Endothelial cell of umbilical vein (primary cell): ENCODE measurements at regions of chr2 and their contacts with region 1.

Region 1: GRCh38 chr2:58680755-58681310 is 439.7 kb upstream of the FANCL start:
- DNase-seq: peak; percentile 8
- H3K4me3 ChIP-seq: no peak overlapping the region
- H3K27ac ChIP-seq: no peak overlapping the region
- H3K4me1 ChIP-seq: no peaks in the 10 kb centered on the region
- H3K27me3 ChIP-seq: no peaks in the 10 kb centered on the region
- CTCF ChIP-seq: no peak
- POLR2A ChIP-seq: no peak

Region 2: DNA sequence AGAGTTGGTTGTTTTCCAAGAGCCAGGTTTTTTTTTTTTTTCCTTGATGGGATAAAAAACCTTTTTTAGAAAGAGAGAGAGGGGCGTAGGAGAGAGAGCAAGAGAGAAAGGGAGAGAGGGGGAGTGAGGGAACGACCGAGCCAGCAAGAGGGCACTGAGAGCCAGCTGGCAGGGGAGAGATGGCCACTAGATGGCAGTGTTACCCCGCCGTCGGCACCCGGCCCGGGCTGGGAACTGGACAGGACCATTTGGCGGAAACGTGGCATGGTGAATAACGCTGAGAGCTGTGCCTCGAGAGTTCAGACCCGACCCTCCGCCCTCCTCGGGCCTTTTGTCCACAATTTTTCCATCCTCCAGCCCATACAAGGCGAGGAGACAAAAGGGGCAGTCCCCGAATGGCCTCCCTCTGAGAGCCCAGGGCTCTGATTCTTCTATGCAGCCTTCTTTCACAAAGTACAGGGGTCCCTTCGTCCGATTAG is 921.0 kb before region 1 on chr2:
- CTCF ChIA-PET with region 1: interaction called, 17 read pairs
- POLR2A ChIA-PET with region 1: no interaction called
- dilution Hi-C with region 1: no loop called
- intact Hi-C with region 1: loop called (anchors 1 kb)
- DNase-seq: peak; percentile 77
- H3K4me3 ChIP-seq: peak overlapping the region in 1 of 3 experiments; percentile 23
- H3K27ac ChIP-seq: no peak overlapping the region
- H3K4me1 ChIP-seq: peaks cover 4% of the 10 kb centered on the region
- H3K27me3 ChIP-seq: peaks cover 1 to 5% of the 10 kb centered on the region in 2 experiments
- CTCF ChIP-seq: peak; percentile 85 to 96
- POLR2A ChIP-seq: no peak

Region 3: GRCh38 chr2:58419983-58420382 is 260.9 kb before region 1 on chr2:
- CTCF ChIA-PET with region 1: no interaction called
- POLR2A ChIA-PET with region 1: no interaction called
- dilution Hi-C with region 1: no loop called
- intact Hi-C with region 1: no loop called
- DNase-seq: no peak
- H3K4me3 ChIP-seq: no peak overlapping the region
- H3K27ac ChIP-seq: no peak overlapping the region
- H3K4me1 ChIP-seq: no peaks in the 10 kb centered on the region
- H3K27me3 ChIP-seq: peaks cover 0 to under 1% of the 10 kb centered on the region in 2 experiments
- CTCF ChIP-seq: no peak
- POLR2A ChIP-seq: no peak

Region 4: GRCh38 chr2:58578276-58578675 is 102.6 kb before region 1 on chr2:
- CTCF ChIA-PET with region 1: interaction called, 305 read pairs
- POLR2A ChIA-PET with region 1: interaction called, 3 read pairs
- dilution Hi-C with region 1: no loop called
- intact Hi-C with region 1: no loop called
- DNase-seq: no peak
- H3K4me3 ChIP-seq: no peak overlapping the region
- H3K27ac ChIP-seq: no peak overlapping the region
- H3K4me1 ChIP-seq: peaks cover 2% of the 10 kb centered on the region
- H3K27me3 ChIP-seq: no peaks in the 10 kb centered on the region
- CTCF ChIP-seq: no peak
- POLR2A ChIP-seq: no peak

Region 5: GRCh38 chr2:58606799-58607198 is 74.0 kb before region 1 on chr2:
- CTCF ChIA-PET with region 1: interaction called, 12 read pairs
- POLR2A ChIA-PET with region 1: no interaction called
- dilution Hi-C with region 1: no loop called
- intact Hi-C with region 1: no loop called
- DNase-seq: no peak
- H3K4me3 ChIP-seq: no peak overlapping the region
- H3K27ac ChIP-seq: no peak overlapping the region
- H3K4me1 ChIP-seq: no peaks in the 10 kb centered on the region
- H3K27me3 ChIP-seq: no peaks in the 10 kb centered on the region
- CTCF ChIP-seq: no peak
- POLR2A ChIP-seq: no peak

Region 6: GRCh38 chr2:58633576-58634365 is 47.1 kb before region 1 on chr2:
- CTCF ChIA-PET with region 1: interaction called, 21 read pairs
- POLR2A ChIA-PET with region 1: no interaction called
- dilution Hi-C with region 1: no loop called
- intact Hi-C with region 1: no loop called
- DNase-seq: peak; percentile 91
- H3K4me3 ChIP-seq: no peak overlapping the region
- H3K27ac ChIP-seq: peak overlapping the region; percentile 96
- H3K4me1 ChIP-seq: peaks cover 45% of the 10 kb centered on the region
- H3K27me3 ChIP-seq: no peaks in the 10 kb centered on the region
- CTCF ChIP-seq: no peak
- POLR2A ChIP-seq: peak; percentile 35

Region 7: GRCh38 chr2:58669998-58670397 is 10.8 kb before region 1 on chr2:
- CTCF ChIA-PET with region 1: interaction called, 27 read pairs
- POLR2A ChIA-PET with region 1: no interaction called
- dilution Hi-C with region 1: no loop called
- intact Hi-C with region 1: no loop called
- DNase-seq: no peak
- H3K4me3 ChIP-seq: no peak overlapping the region
- H3K27ac ChIP-seq: no peak overlapping the region
- H3K4me1 ChIP-seq: peaks cover 9% of the 10 kb centered on the region
- H3K27me3 ChIP-seq: no peaks in the 10 kb centered on the region
- CTCF ChIP-seq: no peak
- POLR2A ChIP-seq: no peak